Endothelial cell of umbilical vein (primary cell): ENCODE measurements at regions of chr7 and their contacts with region 1.

Region 1: DNA sequence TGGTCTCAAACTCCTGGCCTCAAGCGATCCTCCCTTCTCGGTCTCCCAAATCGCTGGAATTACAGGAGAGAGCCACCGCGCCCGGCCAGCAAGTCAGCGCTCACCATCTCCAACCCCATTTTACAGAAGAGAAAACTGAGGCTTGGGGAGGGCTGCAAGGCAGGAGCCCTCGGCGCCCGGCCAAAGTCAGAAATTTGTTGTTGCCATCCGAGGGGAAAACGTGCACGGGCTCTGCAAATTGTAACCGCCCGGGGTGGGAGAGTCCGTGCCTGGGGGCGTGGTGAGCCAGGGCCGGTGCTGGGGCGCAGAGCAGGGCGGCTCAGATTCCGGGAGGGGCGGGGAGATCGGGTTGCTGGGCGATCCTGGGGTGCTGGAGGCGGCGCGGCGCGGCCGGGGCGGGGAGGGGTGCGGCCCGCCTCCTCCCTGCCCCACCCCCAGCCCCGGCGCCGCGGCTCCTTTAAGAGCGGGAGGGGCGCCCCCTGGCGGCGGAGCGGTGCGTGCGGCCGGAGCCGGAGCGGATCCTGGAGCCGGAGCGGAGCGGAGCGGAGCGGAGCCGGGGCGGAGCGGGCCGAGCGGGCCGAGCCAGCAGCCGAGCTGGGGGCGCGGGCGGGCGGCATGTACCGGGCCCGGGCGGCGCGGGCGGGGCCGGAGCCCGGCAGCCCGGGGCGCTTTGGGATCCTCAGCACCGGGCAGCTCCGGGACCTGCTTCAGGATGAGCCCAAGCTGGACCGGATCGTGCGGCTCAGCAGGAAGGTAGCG is at the start of gene VPS37D:
- DNase-seq: peak; percentile 74
- H3K4me3 ChIP-seq: peak within 1 kb of the TSS; percentile 35 to 67 (median 56)
- H3K27ac ChIP-seq: no peak within 1 kb of the TSS
- H3K4me1 ChIP-seq: peaks cover 3% of the 10 kb centered on the region
- H3K27me3 ChIP-seq: peaks cover 0 to 3% of the 10 kb centered on the region in 2 experiments
- CTCF ChIP-seq: peak; percentile 79 to 80
- POLR2A ChIP-seq: no peak
- total RNA-seq, gene VPS37D: 2.0 and 2.4 TPM in 2 replicates

Region 2: DNA sequence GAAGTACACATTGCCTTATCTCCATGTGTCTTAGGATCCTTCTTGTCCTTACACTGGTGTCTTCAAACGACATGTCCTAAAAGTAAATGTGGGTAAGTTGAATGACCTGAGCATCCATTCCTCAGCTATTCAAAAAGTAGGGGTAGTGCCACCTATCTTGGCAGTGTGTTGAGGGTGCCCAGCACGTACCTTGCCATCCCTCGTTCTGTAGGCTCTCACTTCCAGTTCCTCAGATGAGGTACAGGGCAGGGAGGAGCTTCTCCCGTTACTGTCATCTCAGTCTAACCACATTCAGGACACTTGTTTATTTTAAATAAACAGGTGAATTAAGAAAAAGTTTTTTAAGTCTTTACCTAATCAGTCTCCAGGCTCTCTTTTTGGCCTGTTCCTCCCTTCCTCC is 28.8 kb after region 1 on chr7:
- CTCF ChIA-PET with region 1: no interaction called
- POLR2A ChIA-PET with region 1: no interaction called
- dilution Hi-C with region 1: no loop called
- intact Hi-C with region 1: no loop called
- DNase-seq: no peak
- H3K4me3 ChIP-seq: no peak overlapping the region
- H3K27ac ChIP-seq: no peak overlapping the region
- H3K4me1 ChIP-seq: no peaks in the 10 kb centered on the region
- H3K27me3 ChIP-seq: no peaks in the 10 kb centered on the region
- CTCF ChIP-seq: no peak
- POLR2A ChIP-seq: no peak

Region 3: DNA sequence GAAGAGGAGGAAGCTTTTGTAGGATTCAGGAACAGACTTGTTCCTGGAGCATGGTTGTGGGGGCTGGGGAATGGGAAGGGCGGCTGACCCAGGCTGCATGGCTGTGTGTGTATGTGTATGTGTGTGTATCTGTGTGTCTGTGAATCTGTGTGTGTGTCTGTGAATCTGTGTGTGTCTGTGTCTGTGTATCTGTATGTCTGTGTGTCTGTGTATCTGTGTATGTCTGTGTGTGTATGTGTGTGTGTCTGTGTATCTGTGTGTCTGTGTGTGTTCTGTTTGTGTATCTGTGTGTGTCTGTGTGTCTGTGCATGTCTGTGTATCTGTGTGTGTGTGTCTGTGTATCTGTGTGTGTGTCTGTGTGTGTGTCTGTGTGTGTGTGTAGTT is 58.6 kb after region 1 on chr7:
- CTCF ChIA-PET with region 1: interaction called, 12 read pairs
- POLR2A ChIA-PET with region 1: no interaction called
- dilution Hi-C with region 1: no loop called
- intact Hi-C with region 1: loop called (anchors 2 kb)
- DNase-seq: no peak
- H3K4me3 ChIP-seq: no peak overlapping the region
- H3K27ac ChIP-seq: no peak overlapping the region
- H3K4me1 ChIP-seq: peaks cover 5% of the 10 kb centered on the region
- H3K27me3 ChIP-seq: no peaks in the 10 kb centered on the region
- CTCF ChIP-seq: no peak
- POLR2A ChIP-seq: no peak

Region 4: DNA sequence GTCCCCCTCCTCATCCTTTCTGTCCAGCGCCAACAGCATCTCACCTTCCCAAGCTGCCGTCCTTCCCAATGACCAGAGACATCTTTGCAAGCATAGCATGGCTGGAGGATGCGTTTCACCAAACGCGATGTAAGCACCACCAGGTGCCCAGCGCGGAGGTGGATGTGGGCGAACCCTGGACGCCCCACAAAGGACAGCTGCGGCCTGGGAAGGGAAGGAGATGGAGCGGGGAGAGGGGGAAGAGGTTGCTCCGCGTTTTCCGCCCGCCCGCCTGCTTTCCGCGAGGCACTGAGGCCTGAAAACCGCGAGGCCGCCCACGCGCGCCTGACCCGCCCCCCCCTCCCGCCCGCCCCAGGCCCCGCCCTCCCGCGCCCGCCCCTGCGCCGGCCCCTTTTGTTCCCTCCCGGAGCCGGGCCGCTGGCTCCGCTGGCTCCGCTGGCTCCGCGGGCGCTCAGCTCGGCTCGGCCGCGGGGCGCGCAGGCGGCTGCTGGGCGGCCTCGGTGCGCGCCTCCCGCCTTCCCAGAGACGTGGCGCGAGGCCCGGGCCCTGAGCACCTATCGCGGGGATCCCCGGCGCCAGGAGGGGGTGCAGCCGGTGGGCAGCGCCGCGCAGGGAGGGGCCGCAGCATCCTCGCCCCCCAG is 621.6 kb after region 1 on chr7 and contains the start of gene CLIP2:
- CTCF ChIA-PET with region 1: no interaction called
- POLR2A ChIA-PET with region 1: no interaction called
- dilution Hi-C with region 1: no loop called
- intact Hi-C with region 1: no loop called
- DNase-seq: peak; percentile 67
- H3K4me3 ChIP-seq: peak within 1 kb of the TSS; percentile 75 to 90 (median 85)
- H3K27ac ChIP-seq: peak within 1 kb of the TSS; percentile 29
- H3K4me1 ChIP-seq: peaks cover 11% of the 10 kb centered on the region
- H3K27me3 ChIP-seq: no peaks in the 10 kb centered on the region
- CTCF ChIP-seq: no peak
- POLR2A ChIP-seq: peak; percentile 65
- total RNA-seq, gene CLIP2: 37.1 and 38.0 TPM in 2 replicates